ENCODE measurements at regions of chr7 and their contacts with region 1.

Region 1: GRCh38 chr7:155724327-155725005 is 80.0 kb downstream of the RBM33 start:
- DNase-seq: peak; percentile 70
- ATAC-seq: peak; percentile 44
- H3K4me3 ChIP-seq: peak overlapping the region in 4 of 5 experiments; percentile 18 to 57 (median 36)
- H3K4me3 Mint-ChIP-seq: peak overlapping the region; percentile 81
- H3K27ac ChIP-seq: peak overlapping the region; percentile 88 to 97
- H3K27ac Mint-ChIP-seq: peak overlapping the region; percentile 88
- H3K4me1 ChIP-seq: peaks cover 49 to 59% of the 10 kb centered on the region in 2 donors
- H3K4me1 Mint-ChIP-seq: peaks cover 77% of the 10 kb centered on the region
- H3K27me3 ChIP-seq: no peaks in the 10 kb centered on the region
- H3K27me3 Mint-ChIP-seq: no peaks in the 10 kb centered on the region
- CTCF ChIP-seq: peak; percentile 43

Region 2: GRCh38 chr7:155205368-155206317 is 518.8 kb before region 1 on chr7:
- CTCF ChIA-PET with region 1: no interaction called
- POLR2A ChIA-PET with region 1: no interaction called
- intact Hi-C with region 1: loop called (anchors 5 kb)
- DNase-seq: peak; percentile 91
- ATAC-seq: peak; percentile 84
- H3K4me3 ChIP-seq: peak overlapping the region; percentile 33 to 61 (median 55)
- H3K4me3 Mint-ChIP-seq: peak overlapping the region; percentile 88
- H3K27ac ChIP-seq: peak overlapping the region; percentile 42 to 87
- H3K27ac Mint-ChIP-seq: peak overlapping the region; percentile 89
- H3K4me1 ChIP-seq: peaks cover 19 to 23% of the 10 kb centered on the region in 2 donors
- H3K4me1 Mint-ChIP-seq: peaks cover 20% of the 10 kb centered on the region
- H3K27me3 ChIP-seq: no peaks in the 10 kb centered on the region
- H3K27me3 Mint-ChIP-seq: no peaks in the 10 kb centered on the region
- CTCF ChIP-seq: no peak

Region 3: DNA sequence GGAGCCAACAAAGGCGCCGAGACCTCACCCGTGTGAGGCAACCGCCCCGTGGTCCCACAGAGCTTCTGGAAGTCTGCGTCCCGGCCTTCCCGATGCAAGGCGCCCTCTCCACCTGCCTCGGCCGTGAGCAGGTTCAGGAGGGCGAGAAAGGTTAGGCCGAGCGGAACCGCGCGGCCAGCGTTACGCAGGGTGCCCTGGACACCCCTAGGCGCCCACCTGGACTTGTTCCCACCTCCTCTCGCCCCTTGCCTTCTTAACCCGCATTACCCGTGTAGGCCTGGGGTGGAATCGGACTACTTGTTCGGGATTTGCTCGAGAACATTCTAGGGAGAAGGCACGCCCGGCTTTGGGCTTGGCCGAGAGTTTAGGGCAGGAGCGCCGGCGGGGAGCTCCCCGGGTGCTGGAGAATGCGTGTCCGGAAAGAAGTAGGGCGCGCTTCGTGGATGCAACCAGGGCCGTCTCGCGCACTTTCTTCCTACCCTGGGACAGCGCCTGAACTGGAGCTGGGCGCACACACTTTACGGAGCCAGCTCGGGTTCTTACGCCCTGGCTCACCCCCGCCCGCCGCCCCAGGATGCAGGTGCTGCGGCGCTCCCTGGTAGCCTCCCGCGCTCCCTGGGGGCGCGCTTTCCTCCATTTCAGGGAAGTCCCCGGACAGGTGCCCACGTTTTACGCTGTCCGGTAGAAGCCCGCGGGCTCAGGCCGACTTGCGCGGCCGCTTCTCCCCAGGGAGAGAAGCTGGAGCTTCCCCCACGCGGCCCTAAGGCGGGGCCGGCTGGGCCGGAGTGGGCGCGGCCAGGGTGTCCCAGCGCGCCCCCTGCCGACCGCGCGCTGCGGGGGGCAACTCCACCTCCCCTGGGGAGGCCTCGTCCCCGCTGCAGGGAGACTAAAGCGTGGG is 352.3 kb before region 1 on chr7:
- CTCF ChIA-PET with region 1: interaction called, 4 read pairs
- POLR2A ChIA-PET with region 1: no interaction called
- intact Hi-C with region 1: loop called (anchors 10 kb)
- DNase-seq: peak; percentile 64
- ATAC-seq: peak; percentile 68
- H3K4me3 ChIP-seq: peak overlapping the region in 4 of 5 experiments; percentile 4 to 66 (median 46)
- H3K4me3 Mint-ChIP-seq: peak overlapping the region; percentile 89
- H3K27ac ChIP-seq: no peak overlapping the region
- H3K27ac Mint-ChIP-seq: no peak overlapping the region
- H3K4me1 ChIP-seq: peaks cover 45 to 52% of the 10 kb centered on the region in 2 donors
- H3K4me1 Mint-ChIP-seq: peaks cover 34% of the 10 kb centered on the region
- H3K27me3 ChIP-seq: peaks cover 0 to 66% (median 60%) of the 10 kb centered on the region in 4 experiments
- H3K27me3 Mint-ChIP-seq: peaks cover 65% of the 10 kb centered on the region
- CTCF ChIP-seq: peak; percentile 61

Region 4: DNA sequence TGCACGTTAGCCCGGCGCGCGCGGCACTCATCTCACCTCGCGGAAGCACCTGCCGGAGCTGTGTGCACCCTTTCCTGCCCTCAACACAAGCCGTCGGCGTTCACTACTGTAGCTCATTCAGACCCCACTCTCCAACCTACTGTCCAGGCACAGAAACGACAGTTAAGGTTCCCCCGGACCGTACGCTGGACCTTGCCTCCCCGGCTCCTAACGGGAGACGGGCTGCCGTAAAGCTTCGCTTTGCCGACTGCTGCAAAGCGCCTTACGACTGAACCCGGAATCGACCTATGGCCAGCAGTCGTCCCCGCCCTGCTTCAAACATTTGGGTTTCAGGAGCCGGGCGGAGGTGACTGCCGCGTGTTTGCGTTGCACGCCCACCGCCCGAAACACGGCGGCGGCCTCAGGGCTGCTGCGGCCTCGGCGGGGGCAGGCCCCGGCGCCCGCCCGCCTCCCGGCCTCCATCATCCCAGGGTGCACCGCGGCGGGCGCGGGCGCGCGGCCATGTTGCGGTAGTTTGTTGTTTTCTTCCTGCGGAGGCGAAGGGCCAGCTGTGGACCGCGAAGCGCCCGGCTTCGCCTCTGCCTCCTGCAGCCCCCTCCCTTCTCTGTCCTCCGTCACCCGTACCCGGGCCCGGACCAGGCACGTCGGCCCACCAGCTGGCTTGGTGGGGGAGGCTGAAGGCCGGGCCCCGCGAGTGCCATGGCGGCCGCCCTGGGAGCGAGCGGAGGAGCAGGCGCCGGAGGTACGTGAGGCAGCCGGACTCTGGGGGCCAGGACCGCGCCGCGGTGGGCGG is 80.1 kb before region 1 on chr7 and contains the start of gene RBM33:
- CTCF ChIA-PET with region 1: no interaction called
- POLR2A ChIA-PET with region 1: interaction called, 4 read pairs
- intact Hi-C with region 1: loop called (anchors 2 kb)
- DNase-seq: peak; percentile 93
- ATAC-seq: peak; percentile 74
- H3K4me3 ChIP-seq: peak within 1 kb of the TSS; percentile 70 to 96 (median 90)
- H3K4me3 Mint-ChIP-seq: peak within 1 kb of the TSS; percentile 92
- H3K27ac ChIP-seq: peak within 1 kb of the TSS; percentile 88 to 92
- H3K27ac Mint-ChIP-seq: peak within 1 kb of the TSS; percentile 96
- H3K4me1 ChIP-seq: peaks cover 20 to 25% of the 10 kb centered on the region in 2 donors
- H3K4me1 Mint-ChIP-seq: peaks cover 45% of the 10 kb centered on the region
- H3K27me3 ChIP-seq: no peaks in the 10 kb centered on the region
- H3K27me3 Mint-ChIP-seq: no peaks in the 10 kb centered on the region
- CTCF ChIP-seq: no peak
- total RNA-seq, gene RBM33: 185 and 189 TPM in 2 replicates

Region 5: GRCh38 chr7:155681663-155682062 is 42.8 kb before region 1 on chr7:
- CTCF ChIA-PET with region 1: no interaction called
- POLR2A ChIA-PET with region 1: no interaction called
- intact Hi-C with region 1: loop called (anchors 5 kb)
- DNase-seq: no peak
- ATAC-seq: no peak
- H3K4me3 ChIP-seq: no peak overlapping the region
- H3K4me3 Mint-ChIP-seq: no peak overlapping the region
- H3K27ac ChIP-seq: no peak overlapping the region
- H3K27ac Mint-ChIP-seq: no peak overlapping the region
- H3K4me1 ChIP-seq: peaks cover 3 to 5% of the 10 kb centered on the region in 2 donors
- H3K4me1 Mint-ChIP-seq: peaks cover 50% of the 10 kb centered on the region
- H3K27me3 ChIP-seq: no peaks in the 10 kb centered on the region
- H3K27me3 Mint-ChIP-seq: no peaks in the 10 kb centered on the region
- CTCF ChIP-seq: no peak

Region 6: DNA sequence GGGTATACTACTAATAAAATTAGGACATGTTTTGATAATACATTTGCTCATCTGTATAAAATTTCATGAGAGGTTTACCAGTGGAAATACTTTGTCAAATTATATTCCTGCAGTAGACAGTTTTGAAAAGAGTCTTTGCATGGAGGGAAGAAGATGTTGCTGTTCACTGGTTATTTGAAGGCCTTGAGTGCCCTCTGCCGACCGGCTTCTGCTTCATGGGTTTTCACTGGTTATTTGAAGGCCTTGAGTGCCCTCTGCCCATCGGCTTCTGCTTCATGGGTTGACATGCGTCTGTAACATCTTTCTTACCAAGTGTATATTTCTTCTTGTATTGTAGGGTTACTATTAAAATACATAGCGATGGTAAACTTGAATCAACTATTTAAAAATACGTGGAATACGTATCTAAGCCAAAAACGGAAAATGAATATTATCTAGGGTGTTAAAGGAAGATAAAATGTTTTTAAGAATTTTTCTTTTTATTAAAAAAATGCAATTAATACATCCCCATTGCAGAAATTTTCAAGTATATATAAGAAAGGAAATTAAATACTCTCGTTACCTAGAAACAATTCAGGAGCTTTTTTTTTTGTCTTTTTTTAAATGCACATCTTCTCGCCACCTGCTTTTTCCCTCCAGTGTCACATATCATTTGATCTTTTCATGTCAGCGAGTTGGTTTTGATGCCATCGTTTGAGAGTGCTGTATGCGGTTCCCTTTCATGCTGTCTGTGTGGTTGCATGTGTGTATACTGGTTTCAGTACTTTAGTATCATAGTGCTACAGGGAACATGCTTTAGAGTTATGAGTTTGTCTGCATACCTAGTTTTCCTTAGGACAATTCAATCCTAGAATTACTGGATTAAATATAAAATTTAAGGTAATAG is 14.4 kb after region 1 on chr7:
- CTCF ChIA-PET with region 1: interaction called, 3 read pairs
- POLR2A ChIA-PET with region 1: interaction called, 5 read pairs
- intact Hi-C with region 1: loop called (anchors 2 kb)
- DNase-seq: peak; percentile 81
- ATAC-seq: peak; percentile 36
- H3K4me3 ChIP-seq: no peak overlapping the region
- H3K4me3 Mint-ChIP-seq: no peak overlapping the region
- H3K27ac ChIP-seq: no peak overlapping the region
- H3K27ac Mint-ChIP-seq: peak overlapping the region; percentile 7
- H3K4me1 ChIP-seq: peaks cover 3 to 7% of the 10 kb centered on the region in 2 donors
- H3K4me1 Mint-ChIP-seq: peaks cover 44% of the 10 kb centered on the region
- H3K27me3 ChIP-seq: no peaks in the 10 kb centered on the region
- H3K27me3 Mint-ChIP-seq: no peaks in the 10 kb centered on the region
- CTCF ChIP-seq: peak; percentile 81

Region 7: DNA sequence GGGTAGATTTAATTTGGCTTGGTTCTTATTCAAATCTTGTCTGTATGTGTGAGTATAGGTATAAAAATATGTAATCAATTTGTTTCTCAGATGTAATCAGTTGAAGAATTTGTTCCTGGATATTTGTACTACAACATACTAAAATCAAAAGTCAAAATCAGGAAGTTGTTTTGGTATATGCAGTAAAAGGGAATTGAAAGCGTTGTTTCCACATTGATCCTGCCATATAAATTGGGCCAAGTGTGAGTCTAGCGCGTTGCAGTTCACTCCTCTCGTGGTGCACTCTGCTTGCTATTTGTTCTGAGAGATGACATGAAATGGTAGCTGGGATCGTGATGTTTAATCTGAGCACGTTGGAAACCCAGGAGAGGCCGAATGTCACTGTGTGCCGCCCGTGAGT is 31.9 kb after region 1 on chr7:
- CTCF ChIA-PET with region 1: no interaction called
- POLR2A ChIA-PET with region 1: interaction called, 8 read pairs
- intact Hi-C with region 1: loop called (anchors 5 kb)
- DNase-seq: peak; percentile 47
- ATAC-seq: peak; percentile 62
- H3K4me3 ChIP-seq: no peak overlapping the region
- H3K4me3 Mint-ChIP-seq: peak overlapping the region; percentile 77
- H3K27ac ChIP-seq: peak overlapping the region in 1 of 2 donors; percentile 38
- H3K27ac Mint-ChIP-seq: peak overlapping the region; percentile 91
- H3K4me1 ChIP-seq: peaks cover 31 to 37% of the 10 kb centered on the region in 2 donors
- H3K4me1 Mint-ChIP-seq: peaks cover 65% of the 10 kb centered on the region
- H3K27me3 ChIP-seq: no peaks in the 10 kb centered on the region
- H3K27me3 Mint-ChIP-seq: no peaks in the 10 kb centered on the region
- CTCF ChIP-seq: no peak

Region 8: GRCh38 chr7:156127166-156128134 is 403.0 kb after region 1 on chr7:
- CTCF ChIA-PET with region 1: no interaction called
- POLR2A ChIA-PET with region 1: no interaction called
- intact Hi-C with region 1: no loop called
- DNase-seq: no peak
- ATAC-seq: no peak
- H3K4me3 ChIP-seq: no peak overlapping the region
- H3K4me3 Mint-ChIP-seq: no peak overlapping the region
- H3K27ac ChIP-seq: no peak overlapping the region
- H3K27ac Mint-ChIP-seq: no peak overlapping the region
- H3K4me1 ChIP-seq: no peaks in the 10 kb centered on the region
- H3K4me1 Mint-ChIP-seq: no peaks in the 10 kb centered on the region
- H3K27me3 ChIP-seq: no peaks in the 10 kb centered on the region
- H3K27me3 Mint-ChIP-seq: no peaks in the 10 kb centered on the region
- CTCF ChIP-seq: no peak

Measured in B cell (primary cell).